ENCODE measurements at regions of chr15 and their contacts with region 1.

Region 1: GRCh38 chr15:29821416-29822131 is 694 bp downstream of the TJP1 start:
- DNase-seq: peak; percentile 80
- ATAC-seq: peak; percentile 50

Region 2: GRCh38 chr15:29774900-29775299 is 46.7 kb before region 1 on chr15:
- intact Hi-C with region 1: no loop called
- DNase-seq: no peak
- ATAC-seq: no peak

Region 3: GRCh38 chr15:29805043-29805707 is 16.4 kb before region 1 on chr15:
- intact Hi-C with region 1: loop called (anchors 2 kb)
- DNase-seq: no peak
- ATAC-seq: peak; percentile 88

Region 4: GRCh38 chr15:29870495-29871151 is 49.0 kb after region 1 on chr15:
- intact Hi-C with region 1: loop called (anchors 5 kb)
- DNase-seq: no peak
- ATAC-seq: peak; percentile 66

Region 5: DNA sequence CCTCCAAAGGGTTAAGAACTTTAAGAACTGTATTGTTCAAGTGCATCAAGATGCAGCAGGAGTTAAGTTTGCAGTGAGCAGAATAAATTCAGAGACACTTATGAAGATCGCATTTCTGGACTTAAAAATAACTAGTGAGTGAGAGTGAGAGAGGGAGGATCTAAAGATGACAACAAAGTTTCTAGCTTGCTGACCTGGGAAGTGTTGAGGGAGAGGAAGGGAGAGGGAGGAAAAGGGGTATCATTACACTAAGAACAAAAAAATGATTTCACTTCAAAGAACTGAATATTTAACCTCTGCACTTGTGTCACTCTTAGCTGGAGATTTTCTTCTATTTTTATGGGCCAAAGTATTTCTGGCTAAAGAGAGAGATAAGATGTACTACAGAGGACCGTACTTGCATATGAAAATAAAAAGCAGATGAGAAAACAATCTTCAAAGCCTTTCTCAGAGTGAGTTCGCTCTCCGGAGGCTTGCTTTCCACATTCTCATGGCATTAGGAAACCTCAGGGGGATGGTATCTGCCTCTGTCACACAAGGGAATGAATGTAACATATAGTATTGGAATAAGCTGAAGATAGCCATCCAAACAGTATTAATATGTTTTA is 92.1 kb after region 1 on chr15:
- intact Hi-C with region 1: loop called (anchors 5 kb)
- DNase-seq: no peak
- ATAC-seq: peak; percentile 49

Region 6: DNA sequence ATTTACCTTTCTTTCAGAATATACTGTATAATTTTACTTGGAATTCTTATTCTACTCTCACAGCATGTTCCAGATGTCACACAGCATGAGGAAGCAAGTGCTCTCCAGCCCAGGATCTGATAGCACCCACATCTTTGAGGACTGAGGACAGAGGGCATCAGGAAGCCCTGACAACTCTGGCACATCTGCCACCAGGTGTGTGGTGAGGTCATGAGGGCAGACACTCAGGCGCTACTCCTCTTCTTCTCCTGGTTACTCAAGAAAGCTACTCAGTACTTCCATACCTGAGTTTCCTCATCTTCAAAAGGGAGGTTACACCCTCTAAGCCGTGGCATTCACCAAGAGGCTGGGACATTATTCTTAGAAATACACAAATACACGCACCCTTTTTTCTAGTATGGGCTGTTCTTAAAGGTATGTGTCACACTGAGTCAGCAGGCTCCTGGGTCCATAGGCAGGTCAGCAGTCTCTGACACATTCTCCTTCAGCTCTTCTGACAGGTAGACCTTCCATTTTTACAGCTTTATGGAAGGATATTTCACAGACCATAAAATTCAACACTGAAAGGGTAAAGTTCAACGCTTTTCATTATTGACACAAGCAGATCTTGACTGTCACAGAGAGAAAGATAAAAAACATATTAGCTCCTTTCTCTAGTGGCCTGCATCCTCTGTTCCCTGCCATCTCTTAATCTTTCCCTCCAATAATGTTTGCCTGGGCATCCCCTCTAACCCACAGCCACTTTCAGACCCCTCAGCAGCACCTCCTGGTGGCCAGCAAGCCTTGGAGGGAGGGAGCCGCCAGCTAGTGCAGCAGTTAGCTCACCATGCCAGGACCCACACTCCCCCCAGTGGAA is 103.9 kb after region 1 on chr15:
- intact Hi-C with region 1: loop called (anchors 1 kb)
- DNase-seq: peak; percentile 76
- ATAC-seq: peak; percentile 91